ENCODE measurements at regions of chrX and their contacts with region 1.

Region 1: DNA sequence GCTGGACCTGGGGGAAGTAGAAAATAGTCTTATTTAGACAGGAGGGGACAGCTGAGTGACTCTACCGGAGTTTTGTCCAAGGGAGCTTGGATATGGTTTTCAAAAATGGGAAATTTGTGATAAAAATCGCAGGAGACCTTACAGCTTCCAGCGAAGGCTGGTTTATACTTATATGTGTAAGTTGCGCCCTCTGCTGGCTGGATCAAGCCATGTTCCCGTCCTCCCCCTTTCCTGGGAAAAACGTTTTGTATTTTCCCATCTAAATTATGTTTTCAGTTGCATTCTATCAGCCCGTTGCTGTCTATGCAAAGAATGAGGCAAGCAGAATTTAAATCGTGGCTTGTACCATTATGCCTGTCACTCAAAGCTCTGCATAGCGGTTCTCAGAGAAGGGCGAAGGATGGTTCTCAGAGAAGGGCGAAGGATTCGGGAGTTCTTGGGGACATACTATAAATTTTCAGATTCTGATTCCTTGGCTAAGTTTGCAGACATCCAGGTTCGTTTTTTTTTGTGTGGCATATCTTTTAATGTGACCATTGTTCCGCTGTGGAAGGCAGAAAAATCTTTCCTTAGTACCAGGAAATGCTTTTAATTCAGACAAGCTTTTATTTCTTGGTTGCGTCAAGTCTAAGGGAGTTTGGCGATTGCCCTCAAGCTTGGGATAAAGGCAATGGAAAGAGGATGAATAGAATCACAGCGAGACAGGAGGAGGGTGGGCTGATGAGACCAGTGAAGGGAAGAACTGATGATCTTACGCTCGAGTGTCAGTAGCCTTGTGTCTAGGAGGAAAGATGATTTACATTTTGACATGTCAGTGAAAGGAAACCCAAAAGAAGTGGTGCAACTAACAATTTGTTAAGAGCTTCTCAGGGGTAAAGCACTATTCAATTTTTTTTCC is 128.5 kb upstream of the ARX start:
- DNase-seq: peak; percentile 9 to 29 (median 10)
- H3K4me3 ChIP-seq: no peak overlapping the region
- H3K4me3 Mint-ChIP-seq: peak overlapping the region in 1 of 2 donors; percentile 51
- H3K27ac ChIP-seq: no peak overlapping the region
- H3K27ac Mint-ChIP-seq: no peak overlapping the region
- H3K4me1 ChIP-seq: no peaks in the 10 kb centered on the region
- H3K4me1 Mint-ChIP-seq: peaks cover 2% of the 10 kb centered on the region
- H3K27me3 ChIP-seq: peaks cover 3 to 5% of the 10 kb centered on the region in 2 donors
- H3K27me3 Mint-ChIP-seq: peaks cover 4 to 9% (median 5%) of the 10 kb centered on the region in 3 donors
- CTCF ChIP-seq: peak; percentile 70

Region 2: DNA sequence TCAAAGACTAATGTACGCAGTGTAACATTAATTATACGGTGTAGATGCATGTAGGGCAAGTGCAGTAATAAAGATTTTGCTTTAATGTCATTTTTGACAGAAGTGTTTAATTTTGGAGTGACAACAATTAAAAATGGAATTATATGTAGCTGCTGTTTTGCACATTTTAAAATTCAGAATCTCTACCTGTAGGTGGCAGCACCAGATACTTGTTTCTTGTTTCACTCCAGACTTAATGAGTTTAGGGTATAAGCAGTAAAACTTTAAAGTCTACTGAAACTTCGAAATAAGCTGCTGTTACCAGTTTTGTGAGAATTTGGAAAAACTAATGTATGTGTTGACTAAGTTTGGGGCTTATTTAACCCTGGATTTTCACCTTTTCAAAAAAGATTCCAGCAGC is 305.7 kb before region 1 on chrX:
- intact Hi-C with region 1: loop called (anchors 10 kb)
- DNase-seq: peak in 2 of 3 donors; percentile 3
- H3K4me3 ChIP-seq: no peak overlapping the region
- H3K4me3 Mint-ChIP-seq: no peak overlapping the region
- H3K27ac ChIP-seq: no peak overlapping the region
- H3K27ac Mint-ChIP-seq: no peak overlapping the region
- H3K4me1 ChIP-seq: no peaks in the 10 kb centered on the region
- H3K4me1 Mint-ChIP-seq: no peaks in the 10 kb centered on the region
- H3K27me3 ChIP-seq: peaks cover 0 to 4% of the 10 kb centered on the region in 2 donors
- H3K27me3 Mint-ChIP-seq: peaks cover 0 to 3% (median 0%) of the 10 kb centered on the region in 3 donors
- CTCF ChIP-seq: peak; percentile 61

Region 3: GRCh38 chrX:26146024-26146423 is 1001.7 kb after region 1 on chrX:
- intact Hi-C with region 1: no loop called
- DNase-seq: no peak
- H3K4me3 ChIP-seq: no peak overlapping the region
- H3K4me3 Mint-ChIP-seq: no peak overlapping the region
- H3K27ac ChIP-seq: no peak overlapping the region
- H3K27ac Mint-ChIP-seq: no peak overlapping the region
- H3K4me1 ChIP-seq: no peaks in the 10 kb centered on the region
- H3K4me1 Mint-ChIP-seq: no peaks in the 10 kb centered on the region
- H3K27me3 ChIP-seq: no peaks in the 10 kb centered on the region
- H3K27me3 Mint-ChIP-seq: no peaks in the 10 kb centered on the region
- CTCF ChIP-seq: no peak

Measured in CD14-positive monocyte (primary cell).